ENCODE measurements at regions of chr12 and their contacts with region 1.

Region 1: GRCh38 chr12:111753144-111753881 is 13.4 kb upstream of the ALDH2 start:
- DNase-seq: peak; percentile 74 to 87 (median 85)
- ATAC-seq: peak; percentile 97
- H3K4me3 ChIP-seq: no peak overlapping the region
- H3K27ac ChIP-seq: no peak overlapping the region
- H3K4me1 ChIP-seq: peaks cover 10 to 29% of the 10 kb centered on the region in 2 experiments; a peak in 3 of 5 replicates
- H3K27me3 ChIP-seq: no peaks in the 10 kb centered on the region
- CTCF ChIP-seq: peak; percentile 86 to 92 (median 90)
- EP300 ChIP-seq: no peak
- POLR2A ChIP-seq: no peak
- RAD21 ChIP-seq: peak; percentile 87 to 98

Region 2: GRCh38 chr12:111788178-111788654 is 34.9 kb after region 1 on chr12:
- CTCF ChIA-PET with region 1: interaction called, 21 read pairs
- POLR2A ChIA-PET with region 1: interaction called, 3 read pairs
- in situ Hi-C with region 1: no loop called
- intact Hi-C with region 1: loop called (anchors 2 kb)
- DNase-seq: peak in 1 of 4 experiments; percentile 49
- ATAC-seq: peak; percentile 77
- H3K4me3 ChIP-seq: no peak overlapping the region
- H3K27ac ChIP-seq: no peak overlapping the region
- H3K4me1 ChIP-seq: peaks cover 0 to 20% of the 10 kb centered on the region in 2 experiments; a peak in 4 of 5 replicates
- H3K27me3 ChIP-seq: no peaks in the 10 kb centered on the region; a peak in 1 of 5 replicates
- CTCF ChIP-seq: peak; percentile 48 to 77 (median 77)
- EP300 ChIP-seq: no peak
- POLR2A ChIP-seq: no peak
- RAD21 ChIP-seq: peak; percentile 27 to 79; a peak in 3 of 4 replicates

Region 3: GRCh38 chr12:111812881-111813741 is 59.8 kb after region 1 on chr12:
- CTCF ChIA-PET with region 1: interaction called, 43 read pairs
- POLR2A ChIA-PET with region 1: no interaction called
- in situ Hi-C with region 1: no loop called
- intact Hi-C with region 1: loop called (anchors 1 kb)
- DNase-seq: peak; percentile 84 to 89 (median 84)
- ATAC-seq: peak; percentile 97
- H3K4me3 ChIP-seq: no peak overlapping the region
- H3K27ac ChIP-seq: no peak overlapping the region
- H3K4me1 ChIP-seq: no peaks in the 10 kb centered on the region; a peak in 2 of 5 replicates
- H3K27me3 ChIP-seq: peaks cover 0 to 4% of the 10 kb centered on the region in 2 experiments; a peak in 1 of 5 replicates
- CTCF ChIP-seq: peak; percentile 88 to 96 (median 93)
- EP300 ChIP-seq: no peak
- POLR2A ChIP-seq: no peak
- RAD21 ChIP-seq: peak; percentile 87 to 96